ENCODE measurements at regions of chr10 and their contacts with region 1.

Region 1: GRCh38 chr10:77710759-77711682 is 73.4 kb upstream of the KCNMA1 start:
- DNase-seq: peak; percentile 73
- ATAC-seq: peak; percentile 95
- H3K4me3 Mint-ChIP-seq: peak overlapping the region; percentile 76
- H3K27ac Mint-ChIP-seq: no peak overlapping the region
- H3K4me1 Mint-ChIP-seq: peaks cover 12% of the 10 kb centered on the region
- H3K27me3 Mint-ChIP-seq: peaks cover 16% of the 10 kb centered on the region
- CTCF ChIP-seq: peak; percentile 17

Region 2: GRCh38 chr10:77165445-77166208 is 545.4 kb before region 1 on chr10:
- CTCF ChIA-PET with region 1: interaction called, 32 read pairs
- POLR2A ChIA-PET with region 1: no interaction called
- intact Hi-C with region 1: loop called (anchors 2 kb)
- DNase-seq: no peak
- ATAC-seq: peak; percentile 40
- H3K4me3 Mint-ChIP-seq: peak overlapping the region; percentile 17
- H3K27ac Mint-ChIP-seq: no peak overlapping the region
- H3K4me1 Mint-ChIP-seq: peaks cover 2% of the 10 kb centered on the region
- H3K27me3 Mint-ChIP-seq: peaks cover 19% of the 10 kb centered on the region
- CTCF ChIP-seq: no peak

Region 3: DNA sequence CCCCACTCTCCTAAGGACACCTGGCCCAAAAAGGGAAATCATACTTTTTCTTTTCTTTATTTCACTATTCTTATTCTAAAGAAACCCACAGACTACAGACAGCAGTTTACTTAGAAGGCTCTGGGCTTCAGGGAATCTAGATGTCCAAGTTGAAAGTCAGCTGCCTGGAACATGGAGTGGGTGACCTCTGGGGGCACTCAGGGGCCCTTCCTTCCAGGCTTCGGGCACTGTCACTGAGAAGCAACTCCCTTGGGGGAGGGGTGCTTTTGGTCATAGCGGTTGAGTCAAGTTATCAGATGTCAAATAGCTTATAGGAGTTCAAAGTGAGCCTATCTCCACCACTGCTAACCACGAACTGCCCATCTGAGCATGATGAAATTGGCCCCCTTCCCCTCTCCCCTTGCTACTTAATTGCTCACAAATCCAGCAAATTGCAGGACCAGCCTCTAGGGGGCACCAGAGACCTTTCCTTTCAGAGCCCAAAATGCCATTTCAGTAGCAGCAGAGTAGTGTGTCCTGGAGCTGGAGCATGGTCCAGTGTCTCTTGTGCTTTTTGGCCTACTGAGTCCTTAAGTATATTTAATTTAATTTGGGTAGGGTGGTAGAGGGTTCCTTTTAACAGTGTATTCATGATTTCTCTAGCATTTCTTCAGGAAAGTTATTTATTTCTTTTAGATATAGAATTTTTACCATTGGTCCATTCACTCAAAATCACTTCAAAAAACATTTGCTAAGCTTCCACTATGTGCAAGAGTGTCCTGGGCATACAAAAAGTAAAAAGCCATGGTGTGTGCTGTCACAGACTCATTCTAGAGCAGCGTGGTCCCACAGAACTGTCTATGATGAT is 537.2 kb before region 1 on chr10:
- CTCF ChIA-PET with region 1: interaction called, 32 read pairs
- POLR2A ChIA-PET with region 1: no interaction called
- intact Hi-C with region 1: loop called (anchors 1 kb)
- DNase-seq: peak; percentile 45
- ATAC-seq: peak; percentile 40
- H3K4me3 Mint-ChIP-seq: no peak overlapping the region
- H3K27ac Mint-ChIP-seq: no peak overlapping the region
- H3K4me1 Mint-ChIP-seq: no peaks in the 10 kb centered on the region
- H3K27me3 Mint-ChIP-seq: peaks cover 6% of the 10 kb centered on the region
- CTCF ChIP-seq: peak; percentile 89

Region 4: GRCh38 chr10:77251297-77252013 is 459.6 kb before region 1 on chr10:
- CTCF ChIA-PET with region 1: interaction called, 6 read pairs
- POLR2A ChIA-PET with region 1: no interaction called
- intact Hi-C with region 1: loop called (anchors 1 kb)
- DNase-seq: no peak
- ATAC-seq: no peak
- H3K4me3 Mint-ChIP-seq: no peak overlapping the region
- H3K27ac Mint-ChIP-seq: no peak overlapping the region
- H3K4me1 Mint-ChIP-seq: no peaks in the 10 kb centered on the region
- H3K27me3 Mint-ChIP-seq: peaks cover 8% of the 10 kb centered on the region
- CTCF ChIP-seq: no peak

Region 5: DNA sequence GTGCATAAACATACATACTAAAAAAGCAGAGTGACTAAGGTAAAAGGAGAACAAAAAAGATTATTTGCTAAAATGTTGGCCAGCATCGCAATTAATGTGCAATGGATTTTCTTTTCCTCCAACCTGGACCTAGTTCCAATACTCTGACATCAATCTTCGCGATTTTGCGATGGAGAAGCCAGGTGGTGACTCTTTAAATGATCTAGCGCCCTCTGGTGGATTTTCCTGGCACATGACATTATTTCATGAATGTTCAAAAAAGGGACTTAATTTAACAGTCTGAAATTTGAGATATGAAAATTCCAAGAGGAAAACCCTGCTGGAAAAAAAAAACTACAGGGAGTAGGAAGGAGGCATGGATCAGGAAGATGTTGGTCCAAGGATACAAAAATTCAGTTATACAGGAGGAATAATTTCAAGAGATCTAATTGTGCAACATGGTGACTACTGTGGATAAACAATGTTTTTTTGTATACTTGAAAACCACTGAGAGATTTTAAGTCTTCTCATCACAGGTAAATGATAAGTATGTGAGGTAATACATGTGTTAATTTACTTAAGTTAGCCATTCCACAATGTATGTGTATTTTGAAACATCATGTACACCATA is 69.1 kb before region 1 on chr10:
- CTCF ChIA-PET with region 1: interaction called, 6 read pairs
- POLR2A ChIA-PET with region 1: no interaction called
- intact Hi-C with region 1: loop called (anchors 2 kb)
- DNase-seq: no peak
- ATAC-seq: no peak
- H3K4me3 Mint-ChIP-seq: no peak overlapping the region
- H3K27ac Mint-ChIP-seq: no peak overlapping the region
- H3K4me1 Mint-ChIP-seq: peaks cover 15% of the 10 kb centered on the region
- H3K27me3 Mint-ChIP-seq: peaks cover 33% of the 10 kb centered on the region
- CTCF ChIP-seq: peak; percentile 74

Region 6: GRCh38 chr10:77695186-77695585 is 15.8 kb before region 1 on chr10:
- CTCF ChIA-PET with region 1: interaction called, 14 read pairs
- POLR2A ChIA-PET with region 1: no interaction called
- intact Hi-C with region 1: no loop called
- DNase-seq: no peak
- ATAC-seq: no peak
- H3K4me3 Mint-ChIP-seq: no peak overlapping the region
- H3K27ac Mint-ChIP-seq: no peak overlapping the region
- H3K4me1 Mint-ChIP-seq: peaks cover 11% of the 10 kb centered on the region
- H3K27me3 Mint-ChIP-seq: no peaks in the 10 kb centered on the region
- CTCF ChIP-seq: no peak

Region 7: GRCh38 chr10:77820349-77820748 is 109.3 kb after region 1 on chr10:
- CTCF ChIA-PET with region 1: no interaction called
- POLR2A ChIA-PET with region 1: no interaction called
- intact Hi-C with region 1: no loop called
- DNase-seq: no peak
- ATAC-seq: no peak
- H3K4me3 Mint-ChIP-seq: no peak overlapping the region
- H3K27ac Mint-ChIP-seq: no peak overlapping the region
- H3K4me1 Mint-ChIP-seq: no peaks in the 10 kb centered on the region
- H3K27me3 Mint-ChIP-seq: no peaks in the 10 kb centered on the region
- CTCF ChIP-seq: no peak

Region 8: GRCh38 chr10:77837240-77837924 is 126.4 kb after region 1 on chr10:
- CTCF ChIA-PET with region 1: interaction called, 4 read pairs
- POLR2A ChIA-PET with region 1: no interaction called
- intact Hi-C with region 1: loop called (anchors 2 kb)
- DNase-seq: no peak
- ATAC-seq: peak; percentile 84
- H3K4me3 Mint-ChIP-seq: no peak overlapping the region
- H3K27ac Mint-ChIP-seq: no peak overlapping the region
- H3K4me1 Mint-ChIP-seq: peaks cover 8% of the 10 kb centered on the region
- H3K27me3 Mint-ChIP-seq: no peaks in the 10 kb centered on the region
- CTCF ChIP-seq: no peak